ENCODE measurements at regions of chr7 and their contacts with region 1.

Region 1: DNA sequence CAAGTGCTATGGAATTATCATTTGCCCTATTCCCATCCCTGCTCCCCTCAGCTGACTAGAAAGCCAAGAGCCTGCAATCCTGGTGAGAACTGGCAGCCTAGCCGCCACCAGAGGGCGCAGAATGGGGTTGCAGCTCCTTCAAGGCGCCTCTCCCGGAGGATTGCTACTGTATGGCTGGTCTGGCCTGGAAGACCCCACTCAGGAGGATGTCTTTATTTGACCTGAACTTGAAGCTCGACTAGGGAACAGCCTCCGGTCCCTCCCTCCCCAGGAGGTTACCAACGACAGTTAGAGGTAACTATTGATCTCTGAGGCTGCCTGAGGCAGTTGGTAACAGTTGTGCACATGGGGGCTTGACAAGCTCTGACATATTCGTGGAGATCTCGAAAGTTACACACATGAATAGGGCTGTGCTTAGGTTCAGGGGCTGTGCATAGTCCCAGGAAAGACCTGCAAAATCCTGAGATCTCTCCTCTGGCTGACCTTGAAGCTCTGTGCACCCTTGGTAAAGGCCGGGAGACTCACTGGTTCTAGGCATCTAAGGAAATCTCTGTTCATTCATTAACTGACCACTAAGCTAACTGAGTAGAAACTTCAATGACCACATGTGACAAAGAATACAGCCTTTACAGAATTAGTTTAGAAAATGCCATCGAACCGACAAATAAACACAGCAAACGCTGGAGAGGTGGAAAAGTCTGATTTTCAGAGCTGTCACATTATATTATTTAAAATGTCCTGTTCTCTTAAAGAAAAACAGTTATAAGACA is 65.7 kb downstream of the TSPAN12 start:
- DNase-seq: peak; percentile 88

Region 2: GRCh38 chr7:120114626-120115025 is 677.6 kb before region 1 on chr7:
- intact Hi-C with region 1: no loop called
- DNase-seq: no peak

Region 3: GRCh38 chr7:120941064-120941463 is 148.8 kb after region 1 on chr7:
- intact Hi-C with region 1: loop called (anchors 5 kb)
- DNase-seq: no peak

Region 4: GRCh38 chr7:121081327-121081936 is 289.2 kb after region 1 on chr7:
- intact Hi-C with region 1: no loop called
- DNase-seq: no peak

Measured in cardiac septum (tissue), 1 donor.